CD8-positive, alpha-beta memory T cell (primary cell): ENCODE measurements at regions of chr12 and their contacts with region 1.

Region 1: GRCh38 chr12:119925269-119925668 is 48.1 kb upstream of the CIT start:
- DNase-seq: no peak
- H3K4me3 ChIP-seq: no peak overlapping the region
- H3K4me3 Mint-ChIP-seq: no peak overlapping the region
- H3K27ac ChIP-seq: no peak overlapping the region
- H3K27ac Mint-ChIP-seq: peak overlapping the region in 1 of 8 donors; percentile 1
- H3K4me1 ChIP-seq: no peaks in the 10 kb centered on the region
- H3K4me1 Mint-ChIP-seq: no peaks in the 10 kb centered on the region
- H3K27me3 ChIP-seq: no peaks in the 10 kb centered on the region
- H3K27me3 Mint-ChIP-seq: peaks cover 6 to 8% of the 10 kb centered on the region in 2 donors

Region 2: DNA sequence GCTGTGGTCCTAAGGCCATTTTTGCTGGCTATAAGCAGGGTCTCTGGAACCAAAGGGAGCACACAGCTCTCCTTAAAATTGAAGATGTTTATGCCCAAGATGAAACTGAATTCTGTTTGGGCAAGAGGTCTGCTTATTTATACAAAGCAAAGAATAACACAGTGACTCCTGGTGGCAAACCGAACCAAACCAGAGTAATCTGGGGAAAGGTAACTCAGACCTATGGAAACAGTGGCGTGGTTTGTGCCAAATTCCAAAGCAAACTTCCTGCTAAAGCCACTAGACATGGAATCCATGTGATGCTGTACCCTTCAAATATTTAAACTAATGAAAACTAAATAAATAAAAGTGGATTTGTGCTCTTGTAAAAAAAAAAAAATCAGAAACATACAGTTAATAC is 34.2 kb after region 1 on chr12:
- CTCF ChIA-PET with region 1: no interaction called
- POLR2A ChIA-PET with region 1: no interaction called
- DNase-seq: no peak
- H3K4me3 ChIP-seq: no peak overlapping the region
- H3K4me3 Mint-ChIP-seq: no peak overlapping the region
- H3K27ac ChIP-seq: no peak overlapping the region
- H3K27ac Mint-ChIP-seq: no peak overlapping the region
- H3K4me1 ChIP-seq: no peaks in the 10 kb centered on the region
- H3K4me1 Mint-ChIP-seq: no peaks in the 10 kb centered on the region
- H3K27me3 ChIP-seq: no peaks in the 10 kb centered on the region
- H3K27me3 Mint-ChIP-seq: peaks cover 0 to 2% of the 10 kb centered on the region in 2 donors

Region 3: GRCh38 chr12:120108250-120108649 is 183.0 kb after region 1 on chr12:
- CTCF ChIA-PET with region 1: no interaction called
- POLR2A ChIA-PET with region 1: interaction called, 11 read pairs
- DNase-seq: no peak
- H3K4me3 ChIP-seq: no peak overlapping the region
- H3K4me3 Mint-ChIP-seq: peak overlapping the region in 3 of 7 donors; percentile 23 to 61 (median 61)
- H3K27ac ChIP-seq: no peak overlapping the region
- H3K27ac Mint-ChIP-seq: peak overlapping the region in 2 of 8 donors; percentile 30 to 50
- H3K4me1 ChIP-seq: peaks cover 41% of the 10 kb centered on the region
- H3K4me1 Mint-ChIP-seq: peaks cover 54 to 78% (median 74%) of the 10 kb centered on the region in 3 donors
- H3K27me3 ChIP-seq: no peaks in the 10 kb centered on the region
- H3K27me3 Mint-ChIP-seq: peaks cover 0 to 2% of the 10 kb centered on the region in 2 donors